Psoas muscle (tissue), 8 donors: ENCODE measurements at regions of chrX and their contacts with region 1.

Region 1: DNA sequence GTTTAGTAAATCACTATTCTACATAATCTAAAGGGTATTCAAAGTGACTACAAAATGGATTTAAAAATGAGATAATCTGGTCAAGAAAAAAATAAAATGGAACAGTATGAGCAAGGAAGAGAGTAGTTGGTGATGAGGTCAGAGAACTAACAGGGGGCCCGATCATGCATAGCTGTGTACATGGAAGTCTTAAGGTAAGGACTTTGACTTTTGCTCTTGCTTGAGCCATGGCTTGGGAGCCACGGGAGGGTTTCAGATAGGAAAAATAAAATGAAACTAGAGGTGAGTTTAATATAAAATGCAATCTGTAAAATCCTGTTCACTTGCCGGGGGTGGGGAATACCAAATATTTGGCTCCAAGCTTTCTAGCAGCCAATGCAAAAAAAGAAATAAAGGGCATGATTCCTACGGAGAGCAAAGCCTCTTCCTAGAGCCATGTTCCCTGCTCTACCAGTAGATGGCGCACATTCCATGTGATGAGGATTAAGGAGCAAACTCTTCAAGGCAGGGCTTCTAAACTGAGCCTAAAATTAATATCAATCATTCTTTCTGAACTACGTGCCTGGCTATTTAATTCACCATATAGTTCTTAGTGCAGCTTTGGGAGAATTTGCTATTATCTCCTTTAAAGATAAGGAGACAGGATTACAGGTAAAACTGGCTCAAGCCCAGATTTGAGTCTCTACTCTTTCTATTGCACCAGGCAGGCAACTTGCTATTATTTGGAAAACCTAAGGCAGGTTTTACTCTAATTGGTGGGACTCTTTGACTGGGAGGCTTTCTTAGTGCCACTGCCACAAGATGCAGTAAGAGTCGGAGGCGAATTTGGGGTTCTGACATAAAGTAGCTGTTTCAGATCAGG is 6.8 kb upstream of the CLCN5 start:
- DNase-seq: no peak
- ATAC-seq: peak; percentile 65 to 87 (median 78)
- H3K4me3 ChIP-seq: no peak overlapping the region
- H3K27ac ChIP-seq: no peak overlapping the region
- H3K4me1 ChIP-seq: no peaks in the 10 kb centered on the region
- H3K27me3 ChIP-seq: peaks cover 0 to 21% (median 0%) of the 10 kb centered on the region in 3 donors
- CTCF ChIP-seq: peak; percentile 85

Region 2: DNA sequence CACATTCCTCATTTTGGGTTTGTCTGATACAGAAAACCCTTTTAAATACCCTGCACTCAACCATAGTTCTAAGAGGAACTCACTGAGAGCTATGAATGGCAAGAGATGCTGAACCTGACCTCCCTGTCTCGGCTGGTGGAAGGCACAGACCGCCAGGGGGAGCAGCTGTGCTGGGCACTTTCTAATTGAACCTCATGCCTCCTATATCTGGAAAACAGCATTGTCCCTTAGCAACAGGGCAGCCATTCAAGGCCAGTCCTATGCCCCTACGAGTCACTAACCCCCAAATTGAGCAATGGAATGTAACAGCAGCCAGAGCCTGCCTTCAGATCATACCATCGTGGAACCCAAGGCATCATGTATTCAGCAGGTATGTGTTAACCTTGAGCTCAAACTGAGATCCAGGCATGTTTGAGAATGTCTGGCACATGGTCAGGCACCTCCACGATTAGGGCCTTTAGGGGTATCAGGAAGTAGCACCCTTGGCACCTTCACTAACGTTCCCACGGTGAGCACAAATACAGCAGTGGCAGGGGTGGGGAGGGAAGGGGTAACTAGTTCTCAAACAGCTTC is 31.2 kb before region 1 on chrX:
- intact Hi-C with region 1: loop called in 1 of 2 experiments (anchors 5 kb)
- DNase-seq: peak; percentile 59 to 69
- ATAC-seq: peak in 3 of 4 donors; percentile 46 to 63 (median 57)
- H3K4me3 ChIP-seq: no peak overlapping the region
- H3K27ac ChIP-seq: no peak overlapping the region
- H3K4me1 ChIP-seq: no peaks in the 10 kb centered on the region
- H3K27me3 ChIP-seq: peaks cover 0 to 8% (median 0%) of the 10 kb centered on the region in 3 donors
- CTCF ChIP-seq: peak; percentile 63

Region 3: GRCh38 chrX:49960061-49960460 is 44.5 kb after region 1 on chrX:
- intact Hi-C with region 1: no loop called
- DNase-seq: peak in 1 of 2 donors; percentile 53
- ATAC-seq: peak; percentile 82 to 91 (median 88)
- H3K4me3 ChIP-seq: no peak overlapping the region
- H3K27ac ChIP-seq: peak overlapping the region; percentile 83
- H3K4me1 ChIP-seq: peaks cover 8% of the 10 kb centered on the region
- H3K27me3 ChIP-seq: no peaks in the 10 kb centered on the region
- CTCF ChIP-seq: no peak

Region 4: GRCh38 chrX:50081282-50081889 is 165.8 kb after region 1 on chrX:
- intact Hi-C with region 1: loop called (anchors 2 to 5 kb)
- DNase-seq: peak; percentile 23 to 58
- ATAC-seq: peak in 3 of 4 donors; percentile 61 to 82 (median 76)
- H3K4me3 ChIP-seq: no peak overlapping the region
- H3K27ac ChIP-seq: no peak overlapping the region
- H3K4me1 ChIP-seq: no peaks in the 10 kb centered on the region
- H3K27me3 ChIP-seq: no peaks in the 10 kb centered on the region
- CTCF ChIP-seq: peak; percentile 29

Region 5: DNA sequence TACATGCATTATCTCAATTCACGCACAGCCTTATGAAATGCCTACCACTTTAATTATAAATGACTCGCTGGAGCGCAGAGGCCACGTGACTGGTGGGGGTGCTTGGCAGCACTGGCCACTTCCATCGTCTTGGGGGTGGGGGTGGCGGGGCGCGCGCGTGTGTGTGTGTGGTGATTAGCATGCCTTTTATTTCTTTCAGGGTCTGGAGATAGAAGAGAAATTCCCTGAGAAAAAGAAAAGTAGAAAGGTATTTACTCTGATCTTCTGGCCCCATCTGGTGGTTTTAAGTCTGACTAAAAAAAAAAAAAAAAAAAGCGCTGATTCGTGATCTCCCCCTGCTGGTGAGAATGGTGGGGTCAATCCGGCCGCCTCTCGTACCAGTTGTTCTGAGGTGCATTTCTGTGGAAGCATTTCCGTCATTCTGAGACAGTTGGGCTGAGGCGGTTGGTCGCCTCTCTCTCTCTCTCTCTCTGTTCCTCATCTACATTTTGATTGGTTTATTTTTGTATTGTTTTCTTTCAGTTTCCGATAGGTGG is 288.8 kb after region 1 on chrX and contains the start of gene CCNB3:
- intact Hi-C with region 1: loop called (anchors 2 to 5 kb)
- DNase-seq: peak; percentile 70 to 79
- ATAC-seq: peak; percentile 80 to 97 (median 94)
- H3K4me3 ChIP-seq: peak within 1 kb of the TSS; percentile 52
- H3K27ac ChIP-seq: peak within 1 kb of the TSS; percentile 16
- H3K4me1 ChIP-seq: no peaks in the 10 kb centered on the region
- H3K27me3 ChIP-seq: peaks cover 0 to 11% (median 0%) of the 10 kb centered on the region in 3 donors
- CTCF ChIP-seq: peak; percentile 65
- total RNA-seq, gene CCNB3: 0.25 to 1.1 (median 0.37) TPM

Region 6: DNA sequence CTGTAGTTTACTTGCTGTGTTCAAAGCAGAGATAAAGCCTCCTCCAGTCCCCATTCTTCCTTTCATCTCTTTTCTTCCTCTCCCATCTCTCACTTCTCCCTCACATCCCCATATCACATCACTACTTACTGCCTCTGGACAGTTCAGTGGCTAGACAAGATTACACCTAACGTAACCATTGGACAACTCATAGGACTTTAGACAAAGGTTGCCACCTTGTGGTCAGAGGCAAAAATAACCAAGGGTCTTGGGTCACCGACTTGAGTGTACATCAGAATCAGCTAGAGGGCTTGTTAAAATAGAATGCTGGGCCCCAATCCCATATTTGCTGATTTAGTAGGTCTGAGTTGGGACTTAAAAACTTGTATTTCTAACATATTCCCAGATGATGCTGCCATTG is 664.4 kb after region 1 on chrX:
- intact Hi-C with region 1: loop called (anchors 10 kb)
- DNase-seq: no peak
- ATAC-seq: no peak
- H3K4me3 ChIP-seq: no peak overlapping the region
- H3K27ac ChIP-seq: no peak overlapping the region
- H3K4me1 ChIP-seq: no peaks in the 10 kb centered on the region
- H3K27me3 ChIP-seq: peaks cover 0 to 18% (median 0%) of the 10 kb centered on the region in 3 donors
- CTCF ChIP-seq: peak; percentile 56